PC-9 (cell line): ENCODE measurements at regions of chr2 and their contacts with region 1.

Region 1: DNA sequence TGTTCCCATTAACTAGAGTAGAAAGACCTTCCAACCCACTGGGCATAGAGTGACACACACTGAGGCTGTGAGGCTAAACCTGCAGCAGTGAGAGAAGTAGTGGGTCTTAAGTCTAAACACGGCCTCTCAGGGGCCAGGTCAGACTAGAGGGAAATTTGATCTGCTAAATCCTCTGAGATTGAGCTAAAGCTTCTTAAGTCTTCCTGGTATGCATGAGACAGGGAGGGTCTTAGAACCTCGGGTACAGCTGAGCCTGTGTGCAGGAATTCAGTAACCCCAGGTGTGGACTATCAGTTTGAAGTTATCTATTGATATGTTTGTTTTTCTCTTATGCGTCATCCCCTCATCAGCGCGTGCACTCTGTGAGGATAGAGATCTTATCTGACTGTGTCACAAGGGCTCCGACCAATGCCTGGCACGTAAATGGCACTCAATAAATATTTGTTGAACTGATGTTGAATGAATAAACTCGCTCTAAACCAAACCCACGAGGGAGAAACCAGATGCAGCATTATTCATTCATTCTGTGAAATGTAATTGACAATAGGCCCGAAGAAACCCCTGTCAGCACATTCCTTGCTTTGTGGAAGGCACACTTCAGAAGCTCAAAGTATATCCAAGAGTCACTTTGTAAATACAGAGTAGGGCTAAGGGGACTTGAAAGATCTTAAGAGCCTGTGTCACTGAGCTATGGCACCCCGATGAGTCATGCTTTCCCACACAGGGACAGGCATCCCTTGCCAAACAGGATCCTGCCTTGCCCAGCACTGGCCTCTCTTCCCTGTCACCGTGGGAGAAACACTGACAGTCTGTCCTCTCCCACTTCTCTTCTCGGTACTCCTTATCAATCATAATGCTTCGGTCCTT is 21.7 kb upstream of the RAB10 start:
- DNase-seq: peak; percentile 80 to 100
- H3K4me3 ChIP-seq: peak overlapping the region; percentile 23; the same call in 1 of the 2 replicates
- H3K27ac ChIP-seq: peak overlapping the region; percentile 93
- H3K4me1 ChIP-seq: peaks cover 76% of the 10 kb centered on the region
- H3K27me3 ChIP-seq: no peaks in the 10 kb centered on the region
- CTCF ChIP-seq: no peak

Region 2: GRCh38 chr2:25928668-25929067 is 83.6 kb before region 1 on chr2:
- CTCF ChIA-PET with region 1: no interaction called
- POLR2A ChIA-PET with region 1: no interaction called
- intact Hi-C with region 1: no loop called
- DNase-seq: no peak
- H3K4me3 ChIP-seq: no peak overlapping the region
- H3K27ac ChIP-seq: no peak overlapping the region
- H3K4me1 ChIP-seq: no peaks in the 10 kb centered on the region
- H3K27me3 ChIP-seq: no peaks in the 10 kb centered on the region
- CTCF ChIP-seq: no peak

Region 3: GRCh38 chr2:26033818-26034636 is 21.8 kb after region 1 on chr2 and contains the start of gene RAB10:
- CTCF ChIA-PET with region 1: interaction called, 4 read pairs
- POLR2A ChIA-PET with region 1: interaction called, 9 read pairs
- intact Hi-C with region 1: loop called (anchors 1 kb)
- DNase-seq: peak; percentile 98 to 100
- H3K4me3 ChIP-seq: peak within 1 kb of the TSS; percentile 94
- H3K27ac ChIP-seq: peak within 1 kb of the TSS; percentile 93
- H3K4me1 ChIP-seq: peaks cover 34% of the 10 kb centered on the region
- H3K27me3 ChIP-seq: no peaks in the 10 kb centered on the region
- CTCF ChIP-seq: no peak
- total RNA-seq, gene RAB10: 150 and 171 TPM in 2 replicates